ENCODE measurements at regions of chr7 and their contacts with region 1.

Region 1: DNA sequence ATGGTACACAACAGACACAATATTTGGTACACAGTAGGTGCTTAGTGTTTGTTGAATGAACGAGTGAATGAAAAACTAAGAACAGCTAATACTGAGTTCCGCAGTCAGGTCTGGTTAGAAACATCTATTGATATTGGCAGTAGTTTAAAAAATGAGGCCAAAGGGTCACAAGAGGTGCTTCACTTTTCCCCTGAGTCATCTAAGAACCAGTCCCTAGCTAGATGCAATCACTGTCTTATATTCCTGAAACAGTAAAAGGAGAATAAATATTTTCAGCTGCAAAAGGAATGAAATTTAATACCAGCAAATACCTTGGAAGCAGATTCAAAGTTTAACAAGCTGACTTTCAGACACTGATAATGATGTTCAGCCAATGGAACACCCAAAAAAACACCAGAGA is 54.5 kb downstream of the SCRN1 start:
- H3K4me3 Mint-ChIP-seq: no peak overlapping the region
- H3K27ac Mint-ChIP-seq: no peak overlapping the region
- H3K4me1 Mint-ChIP-seq: no peaks in the 10 kb centered on the region
- H3K27me3 Mint-ChIP-seq: no peaks in the 10 kb centered on the region

Region 2: DNA sequence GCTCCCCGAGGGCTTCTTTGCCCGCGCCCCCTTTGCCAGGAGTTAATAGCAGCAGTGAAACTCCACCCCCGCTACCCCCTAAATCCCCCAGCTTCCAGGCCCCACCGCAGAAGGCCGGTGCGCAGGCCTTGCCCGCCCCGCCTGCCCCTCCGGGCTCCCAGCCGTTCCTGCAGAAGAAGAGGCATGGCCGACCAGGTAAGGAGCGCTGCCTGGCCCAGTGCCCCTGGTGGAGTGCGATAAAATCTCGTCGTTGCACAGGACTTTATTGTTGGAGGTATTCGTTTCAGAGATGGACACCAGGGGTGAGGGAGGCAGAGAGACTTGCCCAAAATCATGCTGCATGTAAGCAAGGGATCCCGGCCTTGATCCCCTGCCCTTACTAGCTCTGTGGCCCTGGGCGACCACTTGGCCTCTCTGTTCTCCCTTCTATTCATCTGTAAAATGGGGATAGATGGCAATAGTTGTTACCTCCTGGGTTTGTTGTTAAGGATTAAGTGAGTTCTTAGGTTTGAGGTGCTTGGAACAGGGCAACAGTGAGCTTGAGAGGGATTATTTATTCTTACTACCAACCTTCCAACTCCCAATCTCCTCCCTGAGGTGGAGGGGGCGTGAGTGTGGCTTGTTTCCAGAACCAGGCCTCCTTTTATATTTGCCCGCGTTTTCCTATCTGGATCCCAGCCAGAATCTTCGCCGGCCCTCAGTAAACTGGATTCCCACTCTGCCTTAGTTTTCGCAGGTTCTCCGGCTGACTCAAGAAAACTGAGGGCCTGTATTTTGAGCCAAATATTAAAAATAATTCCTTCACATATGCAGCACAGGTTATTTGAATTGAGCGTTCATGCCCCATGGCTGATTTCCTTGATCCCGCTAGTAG is 50.5 kb before region 1 on chr7:
- intact Hi-C with region 1: no loop called
- H3K4me3 Mint-ChIP-seq: no peak overlapping the region
- H3K27ac Mint-ChIP-seq: no peak overlapping the region
- H3K4me1 Mint-ChIP-seq: peaks cover 8% of the 10 kb centered on the region
- H3K27me3 Mint-ChIP-seq: peaks cover 29% of the 10 kb centered on the region

Region 3: GRCh38 chr7:30091491-30091912 is 156.4 kb after region 1 on chr7:
- intact Hi-C with region 1: no loop called
- H3K4me3 Mint-ChIP-seq: no peak overlapping the region
- H3K27ac Mint-ChIP-seq: no peak overlapping the region
- H3K4me1 Mint-ChIP-seq: peaks cover 11% of the 10 kb centered on the region
- H3K27me3 Mint-ChIP-seq: no peaks in the 10 kb centered on the region

Region 4: DNA sequence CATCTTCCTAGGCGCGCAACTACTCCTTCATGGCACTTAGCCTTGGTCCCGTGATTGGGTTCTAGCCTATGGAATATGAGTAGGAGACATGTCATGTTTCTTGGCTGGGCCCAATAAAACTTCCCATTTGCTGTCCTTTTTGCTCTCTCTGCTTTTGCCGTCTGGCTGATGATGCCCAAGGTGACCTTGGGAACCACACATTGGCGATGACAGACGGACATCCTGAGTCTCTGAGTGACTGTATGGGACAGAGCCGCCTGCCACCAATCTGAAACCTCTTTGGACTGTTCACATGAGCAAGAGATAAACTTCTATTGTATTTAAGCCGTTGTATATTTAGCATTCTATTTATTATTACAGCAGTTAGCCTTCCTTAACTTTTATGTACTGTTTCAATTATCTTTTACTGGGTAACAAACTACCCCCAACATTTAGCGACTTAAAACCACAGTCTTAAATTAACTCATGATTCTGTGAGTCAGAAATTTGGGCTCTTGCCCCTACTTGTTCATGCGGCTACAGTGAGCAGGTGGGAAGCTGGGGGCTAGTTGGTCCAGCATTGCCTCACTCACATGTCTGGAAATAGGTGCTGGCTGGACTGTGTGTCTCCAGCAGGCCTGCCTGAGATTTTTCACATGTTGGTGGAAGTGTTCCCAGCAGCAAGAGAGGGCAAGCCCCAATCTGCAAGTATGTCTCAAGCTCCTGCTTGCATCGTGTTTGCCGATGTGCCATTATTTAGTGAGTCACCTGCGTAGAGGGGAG is 471.7 kb after region 1 on chr7:
- intact Hi-C with region 1: loop called (anchors 10 kb)
- H3K4me3 Mint-ChIP-seq: no peak overlapping the region
- H3K27ac Mint-ChIP-seq: no peak overlapping the region
- H3K4me1 Mint-ChIP-seq: peaks cover 11% of the 10 kb centered on the region
- H3K27me3 Mint-ChIP-seq: no peaks in the 10 kb centered on the region

Region 5: GRCh38 chr7:30548762-30549344 is 613.7 kb after region 1 on chr7:
- intact Hi-C with region 1: no loop called
- H3K4me3 Mint-ChIP-seq: no peak overlapping the region
- H3K27ac Mint-ChIP-seq: peak overlapping the region; percentile 62
- H3K4me1 Mint-ChIP-seq: peaks cover 34% of the 10 kb centered on the region
- H3K27me3 Mint-ChIP-seq: no peaks in the 10 kb centered on the region

Region 6: GRCh38 chr7:30702200-30702599 is 767.1 kb after region 1 on chr7:
- intact Hi-C with region 1: no loop called
- H3K4me3 Mint-ChIP-seq: no peak overlapping the region
- H3K27ac Mint-ChIP-seq: no peak overlapping the region
- H3K4me1 Mint-ChIP-seq: no peaks in the 10 kb centered on the region
- H3K27me3 Mint-ChIP-seq: peaks cover 3% of the 10 kb centered on the region

Measured in dendritic cell treated with granulocyte-macrophage colony-stimulating factor and Interleukin-4, amounts not matched to agents 40 ng/mL and 50 ng/mL, for 4 days (primary cell).